Activated T-helper 1 cell treated with anti-CD3 and anti-CD28 coated beads, Interleukin-12 subunit alpha, Interleukin-12 subunit beta, Interleukin-2, Interleukin-4 antibody, amounts not matched to agents 30 ng/mL and 10 ng/mL and 1 ng/mL, durations not matched to agents 14 hours and 24 hours and 36 hours (primary cell): ENCODE measurements at regions of chr13 and their contacts with region 1.

Region 1: GRCh38 chr13:50255639-50256038 is 240.4 kb downstream of the KCNRG start:
- DNase-seq: no peak
- H3K4me3 Mint-ChIP-seq: no peak overlapping the region
- H3K27ac Mint-ChIP-seq: peak overlapping the region; percentile 62
- H3K4me1 Mint-ChIP-seq: peaks cover 69% of the 10 kb centered on the region
- H3K27me3 Mint-ChIP-seq: peaks cover 46% of the 10 kb centered on the region

Region 2: DNA sequence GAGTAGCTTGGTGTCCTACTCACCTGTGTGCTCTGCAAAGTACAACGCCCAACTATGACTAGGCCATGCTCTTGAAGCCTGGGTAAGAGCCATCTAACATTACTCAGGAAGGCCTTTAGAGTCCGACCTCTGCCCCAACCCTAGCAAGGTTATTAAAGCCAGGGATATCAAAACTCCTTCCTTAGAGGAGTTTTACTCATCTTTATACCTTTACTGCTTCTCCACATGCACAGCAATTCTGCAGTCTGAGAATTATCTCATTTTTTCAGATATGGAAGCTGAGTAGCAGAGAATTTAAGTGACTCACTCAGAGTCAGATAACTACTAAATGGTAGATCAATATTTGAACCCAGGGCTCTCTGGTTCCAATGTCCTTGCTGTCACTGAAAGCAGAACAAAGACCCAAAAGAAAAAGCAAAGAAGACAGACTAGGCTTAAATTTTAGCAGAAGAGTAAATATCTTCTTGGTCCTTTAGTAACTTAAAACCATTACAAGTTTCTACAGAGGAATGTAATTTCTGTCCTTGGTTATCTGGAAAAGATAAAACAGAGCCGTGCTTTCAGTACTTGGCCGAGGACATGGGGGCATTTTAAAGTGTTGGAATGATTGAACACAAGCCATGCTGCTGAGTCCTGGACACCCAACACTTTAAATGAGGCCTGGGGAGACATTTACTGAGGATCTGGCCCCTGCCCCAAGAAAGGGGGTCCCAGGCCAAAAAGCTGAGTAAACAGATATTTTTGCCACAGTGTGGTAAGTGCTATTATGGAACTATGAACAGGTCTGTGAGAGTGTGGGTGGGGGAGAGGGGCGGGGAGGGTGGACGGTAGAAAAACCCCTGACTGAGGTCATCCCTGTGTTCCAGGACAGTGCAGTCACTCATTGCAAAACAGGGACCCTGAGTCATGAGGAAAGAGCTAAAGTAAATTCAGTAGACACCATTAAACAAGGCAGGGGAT is 444.8 kb before region 1 on chr13:
- intact Hi-C with region 1: no loop called
- DNase-seq: no peak
- H3K4me3 Mint-ChIP-seq: no peak overlapping the region
- H3K27ac Mint-ChIP-seq: no peak overlapping the region
- H3K4me1 Mint-ChIP-seq: no peaks in the 10 kb centered on the region
- H3K27me3 Mint-ChIP-seq: peaks cover 13% of the 10 kb centered on the region

Region 3: GRCh38 chr13:50229960-50230661 is 25.5 kb before region 1 on chr13:
- intact Hi-C with region 1: loop called (anchors 1 kb)
- DNase-seq: no peak
- H3K4me3 Mint-ChIP-seq: peak overlapping the region; percentile 3
- H3K27ac Mint-ChIP-seq: peak overlapping the region; percentile 56
- H3K4me1 Mint-ChIP-seq: peaks cover 70% of the 10 kb centered on the region
- H3K27me3 Mint-ChIP-seq: peaks cover 21% of the 10 kb centered on the region

Region 4: DNA sequence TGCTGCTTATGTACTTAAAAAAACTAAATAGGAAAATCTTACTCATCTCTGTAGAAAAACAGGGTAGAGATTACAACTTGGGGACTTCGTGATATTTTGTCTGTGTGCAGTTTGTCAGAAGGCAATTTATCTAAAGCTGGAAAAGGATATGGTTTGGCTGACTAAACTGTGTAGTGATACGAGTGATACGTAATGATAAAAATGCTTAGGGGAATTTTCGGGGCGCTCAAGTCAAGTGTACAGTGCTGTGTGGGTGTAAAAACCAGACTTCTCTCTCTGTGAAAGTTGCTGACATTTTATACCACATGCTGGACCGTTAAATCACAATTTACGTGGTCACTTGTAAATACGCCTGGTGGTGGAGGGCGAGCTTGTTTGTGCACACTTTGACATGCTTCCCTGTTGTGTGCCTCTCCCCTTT is 18.7 kb before region 1 on chr13:
- intact Hi-C with region 1: loop called (anchors 1 kb)
- DNase-seq: peak; percentile 45
- H3K4me3 Mint-ChIP-seq: peak overlapping the region; percentile 27
- H3K27ac Mint-ChIP-seq: peak overlapping the region; percentile 78
- H3K4me1 Mint-ChIP-seq: peaks cover 59% of the 10 kb centered on the region
- H3K27me3 Mint-ChIP-seq: peaks cover 22% of the 10 kb centered on the region

Region 5: DNA sequence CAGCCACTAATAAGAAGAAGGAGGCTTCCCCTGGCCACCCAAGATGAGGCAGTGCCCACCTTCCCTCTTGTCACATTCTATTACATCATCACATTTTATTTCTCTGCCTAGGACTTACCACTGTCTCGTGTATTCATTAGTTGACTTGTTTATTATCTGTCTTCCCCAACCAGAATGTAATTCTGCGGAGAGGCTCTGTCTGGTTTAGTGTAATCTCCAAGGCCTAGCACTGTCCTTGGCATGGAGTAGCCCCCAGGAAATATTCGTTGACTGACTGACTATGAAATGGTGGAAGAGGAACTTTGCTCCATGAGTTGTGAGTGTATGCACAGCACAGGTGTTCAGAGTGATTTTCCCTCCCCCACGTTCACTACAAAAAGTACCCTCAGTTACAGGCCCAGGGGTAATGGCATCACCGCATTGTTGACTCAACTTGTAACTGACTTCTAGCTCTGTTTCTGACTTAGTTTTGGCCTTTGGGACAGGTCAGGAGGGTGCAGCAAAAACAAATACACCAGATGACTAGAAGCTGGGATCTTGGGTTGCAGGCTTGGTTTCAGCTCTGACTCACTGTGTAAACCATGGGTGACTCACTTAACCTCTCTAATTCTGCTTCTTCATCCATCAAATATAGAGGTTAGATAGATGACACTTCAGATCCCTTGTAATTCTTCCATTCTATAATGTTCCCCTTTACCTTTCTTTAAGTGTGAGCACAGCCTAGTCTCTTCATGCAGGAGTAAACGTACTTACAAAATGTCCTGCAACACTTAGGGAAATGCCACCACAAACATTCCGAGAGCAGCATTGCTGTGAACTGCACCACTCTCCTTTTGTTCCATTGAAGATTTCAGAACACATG is 10.7 kb before region 1 on chr13:
- intact Hi-C with region 1: loop called (anchors 1 kb)
- DNase-seq: peak; percentile 53
- H3K4me3 Mint-ChIP-seq: peak overlapping the region; percentile 20
- H3K27ac Mint-ChIP-seq: peak overlapping the region; percentile 73
- H3K4me1 Mint-ChIP-seq: peaks cover 56% of the 10 kb centered on the region
- H3K27me3 Mint-ChIP-seq: peaks cover 21% of the 10 kb centered on the region

Region 6: GRCh38 chr13:50284540-50284939 is 28.9 kb after region 1 on chr13:
- intact Hi-C with region 1: loop called (anchors 2 kb)
- DNase-seq: no peak
- H3K4me3 Mint-ChIP-seq: no peak overlapping the region
- H3K27ac Mint-ChIP-seq: no peak overlapping the region
- H3K4me1 Mint-ChIP-seq: peaks cover 19% of the 10 kb centered on the region
- H3K27me3 Mint-ChIP-seq: peaks cover 14% of the 10 kb centered on the region

Region 7: DNA sequence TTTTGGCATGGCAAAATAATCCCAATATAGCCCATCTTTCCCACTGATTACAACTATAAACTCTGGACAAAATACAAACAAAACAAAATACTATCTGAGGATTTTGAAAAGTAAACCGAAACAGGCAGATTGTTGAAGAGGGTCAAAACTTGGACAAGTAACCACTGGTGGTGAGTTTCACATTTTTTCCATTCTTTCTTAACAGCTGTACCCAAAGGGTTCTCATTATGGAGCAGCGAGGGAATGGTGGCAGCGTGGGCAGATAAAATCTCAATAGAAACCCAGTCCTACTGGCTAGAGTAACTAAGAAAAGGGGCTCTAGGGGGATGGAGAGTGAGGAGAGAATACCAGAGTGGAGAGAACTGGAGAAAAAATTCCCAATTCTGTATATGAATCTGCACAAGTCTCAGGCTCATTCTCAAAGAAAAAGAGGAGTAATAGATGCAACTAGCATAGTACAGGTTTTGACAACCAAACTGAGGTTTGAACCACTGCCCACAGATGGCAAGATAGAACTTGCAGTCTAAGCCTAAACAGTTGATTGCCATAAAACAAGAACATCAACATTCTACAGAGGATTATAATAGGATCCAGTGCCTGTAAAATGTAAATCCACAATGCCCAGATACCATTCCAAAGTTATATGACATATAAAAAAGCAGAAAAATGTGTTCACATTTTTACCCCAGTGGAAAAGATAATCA is 44.1 kb after region 1 on chr13:
- intact Hi-C with region 1: no loop called
- DNase-seq: no peak
- H3K4me3 Mint-ChIP-seq: no peak overlapping the region
- H3K27ac Mint-ChIP-seq: no peak overlapping the region
- H3K4me1 Mint-ChIP-seq: no peaks in the 10 kb centered on the region
- H3K27me3 Mint-ChIP-seq: peaks cover 60% of the 10 kb centered on the region

Region 8: GRCh38 chr13:50801087-50801931 is 545.7 kb after region 1 on chr13:
- intact Hi-C with region 1: no loop called
- DNase-seq: peak; percentile 50
- H3K4me3 Mint-ChIP-seq: no peak overlapping the region
- H3K27ac Mint-ChIP-seq: no peak overlapping the region
- H3K4me1 Mint-ChIP-seq: peaks cover 25% of the 10 kb centered on the region
- H3K27me3 Mint-ChIP-seq: no peaks in the 10 kb centered on the region